Activated CD8-positive, alpha-beta T cell treated with anti-CD3 and anti-CD28 coated beads for 36 hours (primary cell): ENCODE measurements at regions of chr13 and their contacts with region 1.

Region 1: DNA sequence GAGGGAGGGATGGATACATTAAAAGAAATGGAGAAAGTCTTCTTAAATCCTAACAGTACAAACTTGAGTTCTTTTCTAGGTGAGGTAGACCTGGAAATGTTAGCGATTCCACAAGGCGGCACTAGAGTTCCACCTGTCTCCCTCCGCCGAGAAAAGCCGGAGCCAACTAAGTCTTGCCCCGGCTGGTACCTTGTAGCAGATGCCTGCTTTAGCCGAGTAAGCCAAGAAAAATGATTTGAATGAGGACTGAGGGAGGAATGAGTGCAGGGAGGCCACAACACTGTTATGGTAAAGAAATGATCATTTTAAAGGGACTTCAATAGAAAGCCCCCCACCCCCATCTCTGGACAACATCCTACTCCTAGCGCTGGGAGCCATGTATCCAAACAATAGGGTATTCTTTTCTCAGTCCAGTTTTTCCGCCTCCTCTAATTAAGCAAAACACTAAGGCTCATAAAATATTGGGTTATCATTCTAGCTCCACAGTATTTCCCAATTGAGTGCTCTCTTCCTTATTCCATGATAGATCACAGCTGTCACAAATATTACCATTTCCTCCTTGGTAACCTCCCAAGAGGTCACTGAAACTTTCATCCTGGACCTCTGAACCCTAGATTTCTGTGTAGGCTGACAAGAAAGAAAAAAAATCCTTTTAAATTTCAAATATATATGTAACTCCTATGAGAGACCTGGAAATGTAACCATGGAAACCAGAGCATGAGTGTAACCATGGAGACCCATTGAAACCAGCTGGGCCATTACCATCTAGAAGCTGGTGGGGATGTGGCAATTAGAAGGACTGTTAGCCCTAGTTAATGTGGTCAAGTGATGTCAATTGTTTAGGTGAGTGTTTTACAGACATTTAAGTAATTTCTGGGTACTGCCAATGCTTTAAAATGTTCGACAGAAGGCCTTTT is 58.3 kb downstream of the GPALPP1 start:
- DNase-seq: peak; percentile 88
- ATAC-seq: peak; percentile 86
- H3K4me3 Mint-ChIP-seq: peak overlapping the region; percentile 69
- H3K27ac Mint-ChIP-seq: no peak overlapping the region
- H3K4me1 Mint-ChIP-seq: peaks cover 24% of the 10 kb centered on the region
- H3K27me3 Mint-ChIP-seq: peaks cover 37% of the 10 kb centered on the region
- CTCF ChIP-seq: peak; percentile 88

Region 2: GRCh38 chr13:44843403-44843802 is 204.2 kb before region 1 on chr13:
- CTCF ChIA-PET with region 1: no interaction called
- POLR2A ChIA-PET with region 1: no interaction called
- intact Hi-C with region 1: no loop called
- DNase-seq: no peak
- ATAC-seq: peak; percentile 7
- H3K4me3 Mint-ChIP-seq: no peak overlapping the region
- H3K27ac Mint-ChIP-seq: no peak overlapping the region
- H3K4me1 Mint-ChIP-seq: no peaks in the 10 kb centered on the region
- H3K27me3 Mint-ChIP-seq: peaks cover 6% of the 10 kb centered on the region
- CTCF ChIP-seq: no peak

Region 3: DNA sequence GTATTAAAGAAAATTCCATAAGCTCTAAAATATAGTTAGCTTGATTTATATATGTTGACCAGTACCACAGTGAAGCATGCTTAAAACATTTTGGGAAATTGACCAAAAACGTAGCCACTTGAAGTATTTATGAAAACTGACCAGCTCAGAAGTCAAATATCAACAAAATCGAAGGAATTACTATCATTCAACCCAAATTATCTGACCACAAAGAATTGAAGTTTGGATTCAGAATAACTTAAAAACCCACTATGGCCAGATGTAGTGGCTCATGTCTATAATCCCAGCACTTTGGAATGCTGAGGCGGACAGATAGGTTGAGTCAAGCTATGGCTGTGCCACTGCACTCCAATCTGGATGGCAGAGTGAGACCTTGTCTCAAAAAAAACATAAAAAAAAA is 26.4 kb before region 1 on chr13:
- CTCF ChIA-PET with region 1: interaction called, 10 read pairs
- POLR2A ChIA-PET with region 1: no interaction called
- intact Hi-C with region 1: no loop called
- DNase-seq: no peak
- ATAC-seq: no peak
- H3K4me3 Mint-ChIP-seq: no peak overlapping the region
- H3K27ac Mint-ChIP-seq: no peak overlapping the region
- H3K4me1 Mint-ChIP-seq: no peaks in the 10 kb centered on the region
- H3K27me3 Mint-ChIP-seq: no peaks in the 10 kb centered on the region
- CTCF ChIP-seq: no peak

Region 4: GRCh38 chr13:45119991-45120864 is 72.6 kb after region 1 on chr13 and contains the start of gene GTF2F2:
- CTCF ChIA-PET with region 1: interaction called, 10 read pairs
- POLR2A ChIA-PET with region 1: interaction called, 3 read pairs
- intact Hi-C with region 1: loop called (anchors 5 kb)
- DNase-seq: peak; percentile 87
- ATAC-seq: peak; percentile 74
- H3K4me3 Mint-ChIP-seq: no peak within 1 kb of the TSS
- H3K27ac Mint-ChIP-seq: no peak within 1 kb of the TSS
- H3K4me1 Mint-ChIP-seq: peaks cover 7% of the 10 kb centered on the region
- H3K27me3 Mint-ChIP-seq: no peaks in the 10 kb centered on the region
- CTCF ChIP-seq: no peak
- total RNA-seq, gene GTF2F2: 25.8 to 28.9 TPM

Region 5: DNA sequence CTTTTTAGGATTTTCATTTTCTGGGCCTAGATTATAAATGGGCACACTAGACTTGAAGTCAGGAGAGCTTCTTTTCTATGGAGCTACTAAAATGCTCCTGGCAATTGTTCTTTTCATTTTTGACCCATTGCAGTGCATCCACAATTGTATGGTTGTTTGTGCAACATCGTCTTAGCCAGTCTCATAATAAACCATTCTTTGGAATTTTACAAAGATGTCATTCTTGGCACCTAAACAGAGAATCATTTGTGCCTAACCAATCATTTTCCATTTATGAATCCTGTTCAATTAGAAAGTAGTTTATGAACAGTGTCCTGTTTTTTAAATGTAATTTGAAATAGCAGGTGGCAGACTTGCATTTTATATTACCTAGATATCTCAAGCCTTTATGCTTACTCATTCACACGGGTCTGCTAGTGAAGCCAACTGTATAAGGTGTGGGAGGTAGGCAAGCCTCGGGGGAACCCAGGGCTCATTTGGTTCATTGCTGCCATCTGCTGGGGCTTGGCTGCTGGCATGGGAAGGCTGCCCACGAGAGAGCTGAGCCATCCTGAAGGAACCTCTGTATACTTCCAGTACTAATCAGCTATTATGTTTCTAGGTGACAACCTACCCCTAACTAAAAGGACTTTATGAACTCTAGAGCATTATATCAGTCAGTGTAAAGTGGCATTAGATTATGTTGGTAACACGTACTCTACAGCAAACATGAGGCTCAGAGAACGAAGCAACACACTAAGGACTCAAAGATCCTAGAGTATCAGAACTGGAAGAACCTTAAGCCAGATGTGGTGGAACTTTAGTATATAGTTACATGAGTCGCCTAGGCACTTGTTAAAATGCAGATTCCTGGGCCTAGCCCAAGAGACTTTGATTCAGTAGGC is 233.3 kb after region 1 on chr13:
- CTCF ChIA-PET with region 1: interaction called, 87 read pairs
- POLR2A ChIA-PET with region 1: no interaction called
- intact Hi-C with region 1: loop called (anchors 5 kb)
- DNase-seq: peak; percentile 81
- ATAC-seq: peak; percentile 96
- H3K4me3 Mint-ChIP-seq: no peak overlapping the region
- H3K27ac Mint-ChIP-seq: no peak overlapping the region
- H3K4me1 Mint-ChIP-seq: peaks cover 9% of the 10 kb centered on the region
- H3K27me3 Mint-ChIP-seq: no peaks in the 10 kb centered on the region
- CTCF ChIP-seq: peak; percentile 71

Region 6: GRCh38 chr13:45297456-45298205 is 250.0 kb after region 1 on chr13:
- CTCF ChIA-PET with region 1: interaction called, 22 read pairs
- POLR2A ChIA-PET with region 1: interaction called, 3 read pairs
- intact Hi-C with region 1: no loop called
- DNase-seq: peak; percentile 16
- ATAC-seq: peak; percentile 79
- H3K4me3 Mint-ChIP-seq: no peak overlapping the region
- H3K27ac Mint-ChIP-seq: peak overlapping the region; percentile 53
- H3K4me1 Mint-ChIP-seq: peaks cover 34% of the 10 kb centered on the region
- H3K27me3 Mint-ChIP-seq: peaks cover 2% of the 10 kb centered on the region
- CTCF ChIP-seq: no peak

Region 7: DNA sequence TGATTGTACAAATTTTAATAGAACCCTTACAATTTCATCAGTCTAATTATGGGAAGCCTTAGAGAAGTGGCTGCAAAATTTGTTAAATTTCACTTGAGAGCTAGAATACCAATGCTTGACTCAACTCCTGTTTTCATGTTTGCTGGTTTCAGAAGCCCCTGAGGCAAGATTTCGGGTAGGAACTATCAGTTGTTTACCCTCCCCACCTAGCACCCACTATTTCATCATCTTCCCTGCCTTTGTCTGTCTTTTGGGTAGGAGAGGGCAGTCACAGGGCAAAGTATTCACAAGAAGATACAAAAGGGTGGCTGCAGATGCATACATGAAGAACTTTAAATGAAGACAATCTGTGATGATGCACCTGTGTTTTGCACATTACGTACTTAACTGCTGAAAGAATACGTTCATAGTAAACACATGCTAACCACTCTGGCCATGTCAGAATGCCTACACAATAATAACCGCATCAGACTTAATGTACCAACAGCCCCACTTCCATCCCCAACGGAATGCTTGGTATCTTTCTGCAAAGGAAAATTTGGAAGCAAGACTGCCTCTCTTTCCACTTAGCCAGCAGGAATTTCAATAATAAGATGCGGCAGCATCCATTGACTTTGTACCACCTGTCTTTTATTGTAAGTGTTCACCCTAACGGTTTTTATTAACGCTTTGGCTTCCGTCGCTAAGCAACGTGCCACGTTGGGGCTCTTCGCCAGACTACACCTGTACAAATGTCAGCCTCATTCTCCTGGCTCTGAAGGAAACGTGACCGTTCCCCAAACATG is 262.9 kb after region 1 on chr13:
- CTCF ChIA-PET with region 1: interaction called, 93 read pairs
- POLR2A ChIA-PET with region 1: interaction called, 3 read pairs
- intact Hi-C with region 1: loop called (anchors 1 kb)
- DNase-seq: no peak
- ATAC-seq: peak; percentile 10
- H3K4me3 Mint-ChIP-seq: peak overlapping the region; percentile 76
- H3K27ac Mint-ChIP-seq: no peak overlapping the region
- H3K4me1 Mint-ChIP-seq: peaks cover 19% of the 10 kb centered on the region
- H3K27me3 Mint-ChIP-seq: peaks cover 17% of the 10 kb centered on the region
- CTCF ChIP-seq: no peak